ENCODE measurements at regions of chr6 and their contacts with region 1.

Region 1: DNA sequence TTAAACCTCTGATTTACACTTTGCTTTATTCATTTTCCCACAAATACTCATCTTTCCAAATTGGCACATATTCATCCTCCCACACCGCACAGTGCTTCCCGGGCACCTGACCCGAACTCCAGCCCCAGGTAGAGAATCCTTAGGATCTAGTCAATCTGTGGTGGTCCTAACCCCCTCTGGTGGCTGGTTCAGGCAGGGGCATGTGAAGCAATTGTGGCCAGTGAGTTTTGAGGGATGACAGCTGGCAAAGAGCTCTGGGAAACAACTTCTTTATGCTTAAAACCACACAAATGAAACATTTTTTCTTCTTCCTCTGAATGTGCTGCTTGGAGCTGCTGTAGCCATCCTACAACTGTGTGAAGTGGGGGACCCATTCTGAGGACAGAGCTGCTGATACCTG is 54.7 kb downstream of the ELOVL5 start:
- DNase-seq: peak; percentile 60
- ATAC-seq: peak; percentile 39
- H3K4me3 ChIP-seq: no peak overlapping the region
- H3K4me3 Mint-ChIP-seq: no peak overlapping the region
- H3K27ac ChIP-seq: peak overlapping the region; percentile 37 to 81
- H3K27ac Mint-ChIP-seq: peak overlapping the region; percentile 90
- H3K4me1 ChIP-seq: peaks cover 86 to 93% of the 10 kb centered on the region in 2 donors
- H3K4me1 Mint-ChIP-seq: peaks cover 87% of the 10 kb centered on the region
- H3K27me3 ChIP-seq: no peaks in the 10 kb centered on the region
- H3K27me3 Mint-ChIP-seq: no peaks in the 10 kb centered on the region
- CTCF ChIP-seq: peak; percentile 83

Region 2: GRCh38 chr6:52877168-52877567 is 416.9 kb before region 1 on chr6:
- CTCF ChIA-PET with region 1: no interaction called
- POLR2A ChIA-PET with region 1: no interaction called
- intact Hi-C with region 1: no loop called
- DNase-seq: no peak
- ATAC-seq: no peak
- H3K4me3 ChIP-seq: no peak overlapping the region
- H3K4me3 Mint-ChIP-seq: no peak overlapping the region
- H3K27ac ChIP-seq: no peak overlapping the region
- H3K27ac Mint-ChIP-seq: no peak overlapping the region
- H3K4me1 ChIP-seq: peaks cover 0 to 5% of the 10 kb centered on the region in 2 donors
- H3K4me1 Mint-ChIP-seq: peaks cover 3% of the 10 kb centered on the region
- H3K27me3 ChIP-seq: no peaks in the 10 kb centered on the region
- H3K27me3 Mint-ChIP-seq: peaks cover 9% of the 10 kb centered on the region
- CTCF ChIP-seq: no peak

Region 3: GRCh38 chr6:53244958-53245357 is 49.1 kb before region 1 on chr6:
- CTCF ChIA-PET with region 1: interaction called, 23 read pairs
- POLR2A ChIA-PET with region 1: no interaction called
- intact Hi-C with region 1: no loop called
- DNase-seq: peak; percentile 92
- ATAC-seq: peak; percentile 84
- H3K4me3 ChIP-seq: peak overlapping the region in 3 of 5 experiments; percentile 6 to 40 (median 14)
- H3K4me3 Mint-ChIP-seq: peak overlapping the region; percentile 62
- H3K27ac ChIP-seq: peak overlapping the region; percentile 87 to 94
- H3K27ac Mint-ChIP-seq: peak overlapping the region; percentile 89
- H3K4me1 ChIP-seq: peaks cover 78 to 85% of the 10 kb centered on the region in 2 donors
- H3K4me1 Mint-ChIP-seq: peaks cover 87% of the 10 kb centered on the region
- H3K27me3 ChIP-seq: no peaks in the 10 kb centered on the region
- H3K27me3 Mint-ChIP-seq: no peaks in the 10 kb centered on the region
- CTCF ChIP-seq: no peak

Region 4: GRCh38 chr6:53309059-53309900 is 15.2 kb after region 1 on chr6:
- CTCF ChIA-PET with region 1: interaction called, 15 read pairs
- POLR2A ChIA-PET with region 1: no interaction called
- intact Hi-C with region 1: loop called (anchors 2 kb)
- DNase-seq: peak; percentile 39
- ATAC-seq: peak; percentile 60
- H3K4me3 ChIP-seq: peak overlapping the region in 1 of 5 experiments; percentile 2
- H3K4me3 Mint-ChIP-seq: peak overlapping the region; percentile 70
- H3K27ac ChIP-seq: peak overlapping the region; percentile 57 to 86
- H3K27ac Mint-ChIP-seq: peak overlapping the region; percentile 85
- H3K4me1 ChIP-seq: peaks cover 70 to 79% of the 10 kb centered on the region in 2 donors
- H3K4me1 Mint-ChIP-seq: peaks cover 80% of the 10 kb centered on the region
- H3K27me3 ChIP-seq: no peaks in the 10 kb centered on the region
- H3K27me3 Mint-ChIP-seq: no peaks in the 10 kb centered on the region
- CTCF ChIP-seq: no peak

Region 5: GRCh38 chr6:53330137-53330536 is 36.0 kb after region 1 on chr6:
- CTCF ChIA-PET with region 1: interaction called, 10 read pairs
- POLR2A ChIA-PET with region 1: interaction called, 5 read pairs
- intact Hi-C with region 1: no loop called
- DNase-seq: no peak
- ATAC-seq: no peak
- H3K4me3 ChIP-seq: no peak overlapping the region
- H3K4me3 Mint-ChIP-seq: no peak overlapping the region
- H3K27ac ChIP-seq: peak overlapping the region in 1 of 2 donors; percentile 17
- H3K27ac Mint-ChIP-seq: no peak overlapping the region
- H3K4me1 ChIP-seq: peaks cover 68 to 75% of the 10 kb centered on the region in 2 donors
- H3K4me1 Mint-ChIP-seq: peaks cover 80% of the 10 kb centered on the region
- H3K27me3 ChIP-seq: no peaks in the 10 kb centered on the region
- H3K27me3 Mint-ChIP-seq: no peaks in the 10 kb centered on the region
- CTCF ChIP-seq: no peak

Region 6: DNA sequence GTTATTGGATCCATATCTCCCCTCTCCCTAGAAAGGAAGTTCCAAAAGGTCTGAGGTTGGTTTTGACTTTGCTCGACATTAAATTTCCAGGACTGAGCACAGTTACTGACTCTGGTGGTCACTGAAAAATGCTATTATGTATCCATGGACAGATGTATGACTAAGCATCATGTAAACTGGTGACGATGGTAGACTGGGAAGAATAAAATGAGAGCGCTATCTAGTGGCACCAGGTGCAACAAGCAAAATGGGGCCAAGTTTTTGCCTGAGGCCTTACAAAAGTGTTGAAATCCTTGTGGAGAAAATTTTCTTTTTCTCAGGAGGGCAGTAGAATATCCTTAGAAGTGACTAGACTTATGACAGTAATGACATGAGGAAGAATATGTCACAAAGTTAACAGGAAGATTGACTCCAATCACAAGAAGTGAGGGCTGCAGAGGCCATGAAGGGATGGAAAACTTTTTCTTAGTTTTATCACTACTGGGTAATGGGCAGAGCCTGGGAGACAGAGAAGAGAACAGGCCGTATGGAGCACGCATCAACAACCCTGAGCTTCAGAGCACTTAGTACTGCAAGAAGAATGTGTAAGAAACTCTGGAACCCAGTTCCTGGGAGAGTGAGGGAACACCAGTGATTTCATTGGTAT is 143.6 kb after region 1 on chr6:
- CTCF ChIA-PET with region 1: interaction called, 9 read pairs
- POLR2A ChIA-PET with region 1: no interaction called
- intact Hi-C with region 1: loop called (anchors 1 kb)
- DNase-seq: peak; percentile 51
- ATAC-seq: peak; percentile 73
- H3K4me3 ChIP-seq: no peak overlapping the region
- H3K4me3 Mint-ChIP-seq: no peak overlapping the region
- H3K27ac ChIP-seq: no peak overlapping the region
- H3K27ac Mint-ChIP-seq: peak overlapping the region; percentile 32
- H3K4me1 ChIP-seq: peaks cover 0 to 13% of the 10 kb centered on the region in 2 donors
- H3K4me1 Mint-ChIP-seq: peaks cover 23% of the 10 kb centered on the region
- H3K27me3 ChIP-seq: no peaks in the 10 kb centered on the region
- H3K27me3 Mint-ChIP-seq: no peaks in the 10 kb centered on the region
- CTCF ChIP-seq: peak; percentile 60

Region 7: GRCh38 chr6:54640911-54641310 is 1346.8 kb after region 1 on chr6:
- CTCF ChIA-PET with region 1: no interaction called
- POLR2A ChIA-PET with region 1: no interaction called
- intact Hi-C with region 1: no loop called
- DNase-seq: no peak
- ATAC-seq: no peak
- H3K4me3 ChIP-seq: no peak overlapping the region
- H3K4me3 Mint-ChIP-seq: no peak overlapping the region
- H3K27ac ChIP-seq: no peak overlapping the region
- H3K27ac Mint-ChIP-seq: no peak overlapping the region
- H3K4me1 ChIP-seq: no peaks in the 10 kb centered on the region
- H3K4me1 Mint-ChIP-seq: no peaks in the 10 kb centered on the region
- H3K27me3 ChIP-seq: no peaks in the 10 kb centered on the region
- H3K27me3 Mint-ChIP-seq: no peaks in the 10 kb centered on the region
- CTCF ChIP-seq: no peak